IMR-90 (cell line): ENCODE measurements at regions of chr2 and their contacts with region 1.

Region 1: GRCh38 chr2:190069936-190070696 is 7.6 kb upstream of the MSTN start:
- DNase-seq: peak; percentile 75
- ATAC-seq: peak; percentile 69
- H3K4me3 ChIP-seq: no peak overlapping the region
- H3K27ac ChIP-seq: no peak overlapping the region
- H3K4me1 ChIP-seq: no peaks in the 10 kb centered on the region
- H3K27me3 ChIP-seq: no peaks in the 10 kb centered on the region
- CTCF ChIP-seq: peak; percentile 81
- POLR2A ChIP-seq: no peak
- RAD21 ChIP-seq: peak; percentile 81

Region 2: GRCh38 chr2:188485496-188485895 is 1584.6 kb before region 1 on chr2:
- CTCF ChIA-PET with region 1: no interaction called
- POLR2A ChIA-PET with region 1: no interaction called
- dilution Hi-C with region 1: no loop called
- in situ Hi-C with region 1: no loop called
- intact Hi-C with region 1: no loop called
- DNase-seq: peak; percentile 12
- ATAC-seq: peak; percentile 42
- H3K4me3 ChIP-seq: no peak overlapping the region
- H3K27ac ChIP-seq: no peak overlapping the region
- H3K4me1 ChIP-seq: no peaks in the 10 kb centered on the region; the same call in 1 of the 2 replicates
- H3K27me3 ChIP-seq: no peaks in the 10 kb centered on the region
- CTCF ChIP-seq: no peak
- POLR2A ChIP-seq: no peak
- RAD21 ChIP-seq: no peak

Region 3: DNA sequence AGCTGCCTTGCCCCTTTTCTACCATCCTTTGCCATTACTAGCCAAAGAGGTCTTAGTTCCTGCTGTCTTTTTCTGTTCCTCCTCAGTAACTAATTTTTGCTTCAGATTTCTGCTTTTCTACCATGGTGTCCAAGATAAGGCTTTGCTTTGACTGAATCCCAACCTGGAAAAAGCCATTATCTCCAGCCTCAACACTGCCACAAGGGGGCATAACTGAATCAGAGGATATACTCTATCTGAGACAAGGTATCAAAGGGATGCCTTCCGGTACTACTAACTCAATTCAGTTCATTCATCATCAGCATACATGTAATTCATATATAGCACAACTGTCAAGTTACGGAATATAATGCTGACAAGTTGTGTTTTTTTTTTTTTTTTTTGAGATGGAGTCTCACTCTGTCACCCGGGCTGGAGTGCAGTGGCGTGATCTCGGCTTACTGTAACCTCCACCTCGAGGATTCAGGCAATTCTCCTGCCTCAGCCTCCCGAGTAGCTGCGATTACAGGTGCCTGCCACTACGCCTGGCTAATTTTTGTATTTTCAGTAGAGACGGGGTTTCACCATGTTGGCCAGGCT is 318.9 kb before region 1 on chr2:
- CTCF ChIA-PET with region 1: no interaction called
- POLR2A ChIA-PET with region 1: no interaction called
- dilution Hi-C with region 1: no loop called
- in situ Hi-C with region 1: no loop called
- intact Hi-C with region 1: loop called (anchors 1 kb)
- DNase-seq: peak; percentile 25
- ATAC-seq: peak; percentile 80
- H3K4me3 ChIP-seq: no peak overlapping the region
- H3K27ac ChIP-seq: no peak overlapping the region
- H3K4me1 ChIP-seq: no peaks in the 10 kb centered on the region
- H3K27me3 ChIP-seq: no peaks in the 10 kb centered on the region
- CTCF ChIP-seq: peak; percentile 61
- POLR2A ChIP-seq: no peak
- RAD21 ChIP-seq: peak; percentile 49

Region 4: DNA sequence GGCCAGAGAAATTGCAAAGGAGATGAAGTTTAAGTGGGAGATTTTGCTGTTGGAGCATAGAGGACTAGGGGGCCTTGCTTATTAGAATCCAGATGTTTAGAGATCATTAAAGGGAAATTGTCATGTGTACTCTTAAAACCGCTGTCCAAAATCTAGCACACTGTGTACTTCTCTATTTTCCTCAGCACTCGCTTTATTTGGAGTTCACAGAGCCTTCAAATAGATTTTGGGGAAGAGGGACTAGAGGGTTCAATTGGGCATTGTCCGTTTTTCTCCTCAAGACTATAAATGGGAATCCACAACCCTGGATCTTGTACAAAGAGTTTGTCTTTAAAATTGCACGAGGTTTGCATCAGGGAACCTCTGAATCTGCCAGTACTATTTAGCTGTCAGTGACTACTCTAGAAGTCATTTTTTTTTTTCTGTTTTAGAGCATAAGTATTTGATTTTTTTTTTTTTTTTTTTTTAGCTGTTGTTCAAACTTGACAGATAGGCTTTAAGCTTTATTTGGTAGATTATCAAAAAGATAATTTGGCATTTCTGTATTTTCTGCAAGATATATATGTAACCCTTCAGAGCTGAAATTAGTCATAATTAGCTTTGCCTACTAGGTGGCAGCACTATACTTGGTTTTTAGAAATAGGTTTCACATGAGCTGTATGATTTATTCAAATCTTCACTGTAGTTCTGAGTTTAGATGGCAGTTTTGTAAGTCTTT is 271.6 kb before region 1 on chr2:
- CTCF ChIA-PET with region 1: interaction called, 5 read pairs
- POLR2A ChIA-PET with region 1: no interaction called
- dilution Hi-C with region 1: no loop called
- in situ Hi-C with region 1: loop called (anchors 5 kb)
- intact Hi-C with region 1: loop called (anchors 1 kb)
- DNase-seq: peak; percentile 74
- ATAC-seq: peak; percentile 79
- H3K4me3 ChIP-seq: no peak overlapping the region
- H3K27ac ChIP-seq: no peak overlapping the region
- H3K4me1 ChIP-seq: peaks cover 8% of the 10 kb centered on the region; the same call in 1 of the 2 replicates
- H3K27me3 ChIP-seq: no peaks in the 10 kb centered on the region
- CTCF ChIP-seq: peak; percentile 70
- POLR2A ChIP-seq: no peak
- RAD21 ChIP-seq: peak; percentile 77

Region 5: GRCh38 chr2:190050003-190050402 is 20.1 kb before region 1 on chr2:
- CTCF ChIA-PET with region 1: no interaction called
- POLR2A ChIA-PET with region 1: no interaction called
- dilution Hi-C with region 1: no loop called
- in situ Hi-C with region 1: no loop called
- intact Hi-C with region 1: no loop called
- DNase-seq: peak; percentile 46
- ATAC-seq: peak; percentile 88
- H3K4me3 ChIP-seq: no peak overlapping the region
- H3K27ac ChIP-seq: no peak overlapping the region; the same call in 1 of the 2 replicates
- H3K4me1 ChIP-seq: no peaks in the 10 kb centered on the region
- H3K27me3 ChIP-seq: peaks cover 2% of the 10 kb centered on the region; the same call in 1 of the 2 replicates
- CTCF ChIP-seq: no peak
- POLR2A ChIP-seq: no peak
- RAD21 ChIP-seq: no peak

Region 6: GRCh38 chr2:190563109-190563508 is 493.0 kb after region 1 on chr2:
- CTCF ChIA-PET with region 1: no interaction called
- POLR2A ChIA-PET with region 1: no interaction called
- dilution Hi-C with region 1: no loop called
- in situ Hi-C with region 1: no loop called
- intact Hi-C with region 1: no loop called
- DNase-seq: no peak
- ATAC-seq: no peak
- H3K4me3 ChIP-seq: no peak overlapping the region
- H3K27ac ChIP-seq: no peak overlapping the region
- H3K4me1 ChIP-seq: no peaks in the 10 kb centered on the region
- H3K27me3 ChIP-seq: peaks cover 3% of the 10 kb centered on the region; the same call in 1 of the 2 replicates
- CTCF ChIP-seq: no peak
- POLR2A ChIP-seq: no peak
- RAD21 ChIP-seq: no peak